A673 (cell line): ENCODE measurements at regions of chr4 and their contacts with region 1.

Region 1: DNA sequence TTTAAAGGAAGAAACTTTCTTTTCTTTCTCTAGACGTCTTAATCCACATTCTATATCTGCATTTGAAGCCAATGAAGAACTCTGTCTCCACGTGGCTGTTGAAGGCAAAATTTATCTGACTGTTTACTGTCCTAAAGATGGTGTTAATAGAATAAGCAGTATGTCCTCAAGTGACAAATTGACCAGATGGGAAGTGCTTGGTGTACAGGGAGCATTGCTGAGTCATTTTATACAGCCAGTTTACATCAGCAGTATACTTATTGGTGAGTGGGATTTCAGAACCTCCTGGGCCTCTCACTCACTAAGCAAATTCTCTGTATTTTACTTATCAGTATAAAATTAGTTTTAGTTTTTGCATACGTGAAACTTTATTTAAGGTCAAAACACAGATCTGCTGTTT is 33.7 kb downstream of the ADAD1 start:
- DNase-seq: no peak
- H3K4me3 ChIP-seq: no peak overlapping the region
- H3K27ac ChIP-seq: no peak overlapping the region
- H3K4me1 ChIP-seq: no peaks in the 10 kb centered on the region
- H3K27me3 ChIP-seq: no peaks in the 10 kb centered on the region
- CTCF ChIP-seq: no peak

Region 2: GRCh38 chr4:122252584-122252983 is 160.0 kb before region 1 on chr4:
- CTCF ChIA-PET with region 1: no interaction called
- POLR2A ChIA-PET with region 1: interaction called, 12 read pairs
- intact Hi-C with region 1: no loop called
- DNase-seq: no peak
- H3K4me3 ChIP-seq: no peak overlapping the region
- H3K27ac ChIP-seq: no peak overlapping the region
- H3K4me1 ChIP-seq: no peaks in the 10 kb centered on the region
- H3K27me3 ChIP-seq: no peaks in the 10 kb centered on the region
- CTCF ChIP-seq: no peak

Region 3: GRCh38 chr4:122309988-122310626 is 102.4 kb before region 1 on chr4:
- CTCF ChIA-PET with region 1: no interaction called
- POLR2A ChIA-PET with region 1: no interaction called
- intact Hi-C with region 1: no loop called
- DNase-seq: peak; percentile 30
- H3K4me3 ChIP-seq: no peak overlapping the region
- H3K27ac ChIP-seq: no peak overlapping the region
- H3K4me1 ChIP-seq: no peaks in the 10 kb centered on the region
- H3K27me3 ChIP-seq: no peaks in the 10 kb centered on the region
- CTCF ChIP-seq: peak; percentile 68